Caco-2 (cell line): ENCODE measurements at regions of chr17 and their contacts with region 1.

Region 1: DNA sequence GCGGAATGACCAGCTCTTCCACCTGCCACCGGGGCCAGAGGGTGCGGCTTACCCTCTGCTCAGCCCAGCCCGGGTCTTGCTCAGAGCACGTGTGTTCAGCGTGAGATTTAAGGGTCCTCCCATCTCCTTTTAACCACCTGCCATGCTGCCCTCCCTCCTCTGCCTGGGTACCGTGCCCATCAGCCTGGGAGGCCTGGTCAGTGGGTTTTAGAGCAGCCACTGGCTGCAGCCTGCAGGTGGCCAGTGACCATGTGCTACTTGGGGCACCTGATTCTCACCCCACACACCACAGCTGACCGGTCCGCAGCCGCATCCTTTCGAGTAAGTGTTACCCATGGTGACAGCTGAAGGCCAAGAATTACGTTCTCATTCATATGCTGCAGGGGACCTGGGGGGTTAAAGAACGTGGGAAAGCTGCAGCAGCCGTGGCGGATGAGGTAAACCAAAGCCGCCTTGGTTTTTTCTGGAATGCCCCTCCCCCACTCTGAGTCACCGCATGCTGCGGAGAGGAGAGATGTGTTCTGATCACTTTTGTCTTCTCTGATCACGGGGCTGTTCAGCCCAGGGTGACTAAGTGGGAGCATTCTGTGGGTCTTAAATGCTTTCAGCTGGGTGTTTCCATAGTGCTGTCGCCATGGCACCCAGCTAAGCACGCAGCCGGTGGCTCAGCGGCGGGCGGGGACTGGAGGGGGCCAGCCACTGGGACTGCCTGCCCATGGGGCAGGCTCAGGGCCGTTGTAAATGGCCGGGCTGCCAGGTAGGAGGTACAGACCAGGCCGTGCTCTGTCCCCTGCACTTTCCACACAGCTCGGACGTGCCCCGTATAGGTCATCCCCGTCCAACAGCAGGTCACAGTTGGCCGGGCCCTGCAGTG is 59.8 kb downstream of the BAIAP2 start:
- DNase-seq: peak; percentile 65
- H3K4me3 ChIP-seq: no peak overlapping the region
- H3K4me3 Mint-ChIP-seq: no peak overlapping the region
- H3K27ac Mint-ChIP-seq: peak overlapping the region; percentile 14
- H3K4me1 ChIP-seq: peaks cover 15% of the 10 kb centered on the region
- H3K4me1 Mint-ChIP-seq: no peaks in the 10 kb centered on the region
- H3K27me3 ChIP-seq: no peaks in the 10 kb centered on the region
- H3K27me3 Mint-ChIP-seq: no peaks in the 10 kb centered on the region
- CTCF ChIP-seq: no peak

Region 2: DNA sequence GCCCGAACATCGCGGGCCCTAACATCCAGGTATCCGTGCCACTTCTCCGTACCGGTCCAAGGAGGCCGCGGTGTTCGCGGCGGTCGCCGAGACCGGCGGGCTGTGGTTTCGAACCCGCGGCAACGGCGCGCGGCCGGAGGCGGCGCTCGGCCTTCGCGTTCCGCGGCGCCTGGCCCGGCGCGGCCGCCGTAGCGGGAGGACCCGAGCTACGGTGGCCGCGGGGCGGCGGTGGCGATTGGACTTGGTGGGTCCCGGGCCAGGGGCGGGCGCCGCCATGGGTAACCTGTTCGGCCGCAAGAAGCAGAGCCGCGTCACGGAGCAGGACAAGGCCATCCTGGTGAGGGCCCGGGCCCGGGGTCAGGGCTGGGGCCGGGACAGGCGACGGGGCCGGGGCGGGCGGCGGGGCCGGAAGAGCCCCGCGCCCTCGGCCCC is 103.1 kb before region 1 on chr17 and contains the start of gene CHMP6:
- CTCF ChIA-PET with region 1: no interaction called
- POLR2A ChIA-PET with region 1: no interaction called
- intact Hi-C with region 1: no loop called
- DNase-seq: peak; percentile 72 to 85
- H3K4me3 ChIP-seq: peak within 1 kb of the TSS; percentile 55
- H3K4me3 Mint-ChIP-seq: peak within 1 kb of the TSS; percentile 83
- H3K27ac Mint-ChIP-seq: no peak within 1 kb of the TSS
- H3K4me1 ChIP-seq: peaks cover 13% of the 10 kb centered on the region
- H3K4me1 Mint-ChIP-seq: no peaks in the 10 kb centered on the region
- H3K27me3 ChIP-seq: no peaks in the 10 kb centered on the region
- H3K27me3 Mint-ChIP-seq: no peaks in the 10 kb centered on the region
- CTCF ChIP-seq: no peak
- total RNA-seq, gene CHMP6: 20.1 and 23.2 TPM in 2 replicates

Region 3: GRCh38 chr17:81040791-81041337 is 53.9 kb before region 1 on chr17:
- CTCF ChIA-PET with region 1: no interaction called
- POLR2A ChIA-PET with region 1: no interaction called
- intact Hi-C with region 1: loop called (anchors 5 kb)
- DNase-seq: peak in 1 of 2 experiments; percentile 47
- H3K4me3 ChIP-seq: no peak overlapping the region
- H3K4me3 Mint-ChIP-seq: peak overlapping the region; percentile 44
- H3K27ac Mint-ChIP-seq: peak overlapping the region; percentile 96
- H3K4me1 ChIP-seq: peaks cover 95% of the 10 kb centered on the region
- H3K4me1 Mint-ChIP-seq: peaks cover 67% of the 10 kb centered on the region
- H3K27me3 ChIP-seq: no peaks in the 10 kb centered on the region
- H3K27me3 Mint-ChIP-seq: no peaks in the 10 kb centered on the region
- CTCF ChIP-seq: peak; percentile 18 to 24

Region 4: GRCh38 chr17:81558941-81559806 is 464.4 kb after region 1 on chr17:
- CTCF ChIA-PET with region 1: no interaction called
- POLR2A ChIA-PET with region 1: no interaction called
- intact Hi-C with region 1: no loop called
- DNase-seq: peak; percentile 39 to 46
- H3K4me3 ChIP-seq: no peak overlapping the region
- H3K4me3 Mint-ChIP-seq: no peak overlapping the region
- H3K27ac Mint-ChIP-seq: no peak overlapping the region
- H3K4me1 ChIP-seq: peaks cover 18% of the 10 kb centered on the region
- H3K4me1 Mint-ChIP-seq: peaks cover 8% of the 10 kb centered on the region
- H3K27me3 ChIP-seq: no peaks in the 10 kb centered on the region
- H3K27me3 Mint-ChIP-seq: no peaks in the 10 kb centered on the region
- CTCF ChIP-seq: peak in 1 of 2 experiments; percentile 17